ENCODE measurements at regions of chr12 and their contacts with region 1.

Region 1: GRCh38 chr12:89524541-89525285 is at the start of gene GALNT4:
- ATAC-seq: peak; percentile 52 to 85 (median 62)
- H3K4me3 ChIP-seq: peak within 1 kb of the TSS; percentile 69 to 99 (median 93)
- H3K27ac ChIP-seq: peak within 1 kb of the TSS; percentile 90 to 91
- H3K4me1 ChIP-seq: peaks cover 4 to 6% of the 10 kb centered on the region in 2 donors
- total RNA-seq, gene GALNT4: 1.5 to 4.9 (median 2.8) TPM

Region 2: GRCh38 chr12:88693837-88694445 is 830.8 kb before region 1 on chr12:
- in situ Hi-C with region 1: no loop called
- ATAC-seq: no peak
- H3K4me3 ChIP-seq: no peak overlapping the region
- H3K27ac ChIP-seq: no peak overlapping the region
- H3K4me1 ChIP-seq: no peaks in the 10 kb centered on the region

Region 3: DNA sequence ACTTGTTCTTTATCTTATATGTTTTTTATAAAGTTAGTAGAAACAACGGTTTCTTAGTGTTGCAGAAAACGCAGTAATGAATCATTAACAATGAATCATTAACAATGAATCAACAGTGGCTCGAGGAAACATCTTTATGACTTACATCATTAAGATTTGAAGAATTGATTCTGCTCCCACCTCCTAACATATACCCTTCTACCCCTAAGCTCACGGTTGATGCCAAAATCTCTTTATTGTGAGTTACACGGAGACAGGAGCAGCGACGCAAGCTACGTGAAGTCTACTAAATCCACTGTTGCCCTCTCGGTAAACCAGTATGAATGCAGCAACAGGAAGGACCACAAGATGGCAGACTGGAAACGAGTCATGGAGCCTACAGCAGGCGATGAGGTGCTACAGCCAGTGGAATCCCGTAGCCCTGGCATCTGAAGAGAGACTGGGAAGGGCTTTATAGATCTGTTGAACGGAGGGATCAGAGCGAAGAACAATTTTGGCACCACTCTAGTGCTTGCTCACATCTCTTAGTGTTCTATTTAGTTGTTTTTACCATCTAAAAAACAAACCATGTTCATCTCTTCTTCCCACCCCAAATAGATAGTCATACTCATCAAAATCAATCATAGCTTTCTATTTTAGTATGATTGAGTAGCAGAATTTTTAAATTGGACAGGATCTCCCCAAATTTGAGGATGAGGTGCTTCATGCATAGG is 505.1 kb before region 1 on chr12:
- in situ Hi-C with region 1: loop called in 1 of 9 experiments (anchors 25 kb)
- ATAC-seq: peak; percentile 92 to 100 (median 98)
- H3K4me3 ChIP-seq: peak overlapping the region; percentile 4 to 21 (median 13)
- H3K27ac ChIP-seq: no peak overlapping the region
- H3K4me1 ChIP-seq: no peaks in the 10 kb centered on the region

Region 4: DNA sequence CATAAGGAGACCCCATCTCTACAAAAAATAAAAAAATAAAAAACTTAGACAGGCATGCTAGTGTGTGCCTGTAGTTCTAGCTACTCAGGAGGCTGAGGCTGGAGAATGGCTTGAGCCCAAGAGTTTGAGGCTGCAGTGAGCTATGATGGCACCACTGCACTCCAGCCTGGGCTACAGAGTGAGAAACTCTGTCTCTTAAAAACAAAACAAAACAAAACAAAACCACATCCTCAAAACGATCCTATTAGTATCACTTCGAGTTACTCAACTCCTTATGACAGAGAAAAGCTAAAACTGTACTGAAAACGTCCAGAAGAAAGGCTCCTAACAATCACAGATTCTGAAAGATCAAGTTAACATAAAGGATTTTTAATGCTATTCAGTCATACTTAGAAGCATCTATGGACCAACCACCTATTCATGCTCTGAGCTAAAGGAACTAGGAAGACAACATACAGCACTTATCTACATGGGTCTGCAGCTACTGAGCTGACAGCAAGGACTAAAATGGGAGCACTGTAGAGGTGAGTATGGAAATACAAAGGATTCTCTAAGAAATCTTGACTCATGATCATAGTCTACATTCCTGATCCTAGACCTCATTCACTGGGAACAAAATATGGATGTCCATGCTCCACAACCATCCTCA is 97.1 kb before region 1 on chr12:
- in situ Hi-C with region 1: no loop called
- ATAC-seq: no peak
- H3K4me3 ChIP-seq: no peak overlapping the region
- H3K27ac ChIP-seq: no peak overlapping the region
- H3K4me1 ChIP-seq: no peaks in the 10 kb centered on the region

Region 5: DNA sequence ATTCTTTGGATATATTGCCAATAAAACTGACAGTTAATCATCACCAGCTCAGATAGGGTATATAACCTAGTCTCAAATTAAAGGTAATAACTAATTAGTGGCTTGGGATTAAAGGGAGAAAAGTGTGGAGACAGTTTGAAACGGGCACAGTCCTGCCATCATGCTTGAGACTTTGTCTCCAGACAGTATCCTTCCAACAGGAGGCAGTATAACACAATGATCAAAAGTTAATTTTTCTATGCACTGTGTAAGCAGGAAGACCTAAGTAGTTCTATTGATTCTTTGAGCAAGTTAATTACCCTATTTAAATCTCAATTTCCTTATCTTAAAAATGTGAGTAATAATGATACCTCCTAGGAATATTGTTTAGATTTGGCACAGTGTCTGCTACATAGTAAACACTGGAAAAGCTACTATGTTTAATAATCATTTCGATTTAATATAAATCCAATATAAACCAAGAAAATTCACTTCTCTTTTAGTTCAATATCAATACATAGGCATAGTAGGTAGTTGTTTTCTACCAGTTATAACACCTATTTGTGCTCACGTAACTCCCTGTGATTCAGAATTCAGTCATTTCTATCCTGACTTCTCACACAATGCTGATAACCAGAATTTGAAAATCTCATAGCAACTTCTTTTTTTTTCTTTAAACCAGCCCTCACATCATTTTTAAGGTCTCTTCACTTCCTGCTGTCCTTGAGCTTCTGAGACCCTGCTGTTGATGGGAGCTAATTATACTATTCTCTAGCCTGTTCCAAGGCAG is 53.8 kb before region 1 on chr12:
- in situ Hi-C with region 1: loop called in 1 of 9 experiments (anchors 10 kb)
- ATAC-seq: peak in 4 of 8 experiments; percentile 42 to 93 (median 90)
- H3K4me3 ChIP-seq: no peak overlapping the region
- H3K27ac ChIP-seq: no peak overlapping the region
- H3K4me1 ChIP-seq: peaks cover 2 to 11% of the 10 kb centered on the region in 2 donors

Region 6: GRCh38 chr12:89709157-89709994 is 184.7 kb after region 1 on chr12:
- in situ Hi-C with region 1: loop called in 1 of 9 experiments (anchors 25 kb)
- ATAC-seq: peak; percentile 68 to 85 (median 82)
- H3K4me3 ChIP-seq: peak overlapping the region; percentile 68 to 86 (median 75)
- H3K27ac ChIP-seq: peak overlapping the region; percentile 95 to 96
- H3K4me1 ChIP-seq: peaks cover 0 to 7% of the 10 kb centered on the region in 2 donors

Region 7: GRCh38 chr12:90909069-90909770 is 1384.5 kb after region 1 on chr12:
- in situ Hi-C with region 1: loop called in 1 of 9 experiments (anchors 25 kb)
- ATAC-seq: peak in 5 of 8 experiments; percentile 33 to 68 (median 54)
- H3K4me3 ChIP-seq: no peak overlapping the region
- H3K27ac ChIP-seq: no peak overlapping the region
- H3K4me1 ChIP-seq: no peaks in the 10 kb centered on the region

Region 8: DNA sequence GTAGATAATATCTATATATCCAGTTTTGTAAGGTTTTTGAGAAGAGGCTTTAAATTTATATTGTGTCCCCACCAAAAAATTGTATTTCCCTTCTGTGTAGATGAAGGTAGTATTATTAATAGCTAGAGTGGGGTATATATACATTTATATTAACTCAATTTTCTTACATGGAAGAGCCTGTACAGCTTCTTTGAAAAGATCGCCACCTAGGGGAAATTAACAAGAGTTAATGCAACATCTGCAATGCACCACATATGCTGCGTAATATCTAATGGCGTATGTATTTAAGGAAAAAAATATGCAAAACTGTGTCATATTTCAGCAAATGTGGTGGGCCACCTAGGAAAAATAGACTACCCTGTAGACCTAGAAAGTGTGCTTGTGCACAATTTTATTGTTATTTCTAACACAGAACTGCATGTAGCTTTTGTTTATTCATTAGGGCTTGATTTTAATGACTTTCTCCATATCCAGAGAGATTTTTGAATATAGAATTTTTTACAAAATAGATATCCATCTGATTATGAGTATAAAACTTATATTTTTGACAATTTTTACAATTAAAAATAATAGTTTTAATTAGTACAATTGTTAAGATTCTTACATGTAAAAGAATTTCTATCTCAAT is 1416.3 kb after region 1 on chr12:
- in situ Hi-C with region 1: loop called in 1 of 9 experiments (anchors 25 kb)
- ATAC-seq: peak in 4 of 8 experiments; percentile 52 to 90 (median 64)
- H3K4me3 ChIP-seq: no peak overlapping the region
- H3K27ac ChIP-seq: no peak overlapping the region
- H3K4me1 ChIP-seq: peaks cover 0 to 3% of the 10 kb centered on the region in 2 donors

Region 9: GRCh38 chr12:90959538-90960139 is 1434.9 kb after region 1 on chr12:
- in situ Hi-C with region 1: loop called in 1 of 9 experiments (anchors 25 kb)
- ATAC-seq: peak in 6 of 8 experiments; percentile 47 to 77 (median 63)
- H3K4me3 ChIP-seq: no peak overlapping the region
- H3K27ac ChIP-seq: no peak overlapping the region
- H3K4me1 ChIP-seq: no peaks in the 10 kb centered on the region